ENCODE measurements at regions of chr1 and their contacts with region 1.

Region 1: GRCh38 chr1:108828022-108828961 is 28.6 kb downstream of the AKNAD1 start:
- DNase-seq: peak; percentile 83
- ATAC-seq: peak; percentile 81 to 82

Region 2: GRCh38 chr1:108897865-108898720 is 69.8 kb after region 1 on chr1:
- intact Hi-C with region 1: loop called (anchors 1 to 5 kb)
- DNase-seq: no peak
- ATAC-seq: peak; percentile 67 to 68